IMR-90 (cell line): ENCODE measurements at regions of chr5 and their contacts with region 1.

Region 1: DNA sequence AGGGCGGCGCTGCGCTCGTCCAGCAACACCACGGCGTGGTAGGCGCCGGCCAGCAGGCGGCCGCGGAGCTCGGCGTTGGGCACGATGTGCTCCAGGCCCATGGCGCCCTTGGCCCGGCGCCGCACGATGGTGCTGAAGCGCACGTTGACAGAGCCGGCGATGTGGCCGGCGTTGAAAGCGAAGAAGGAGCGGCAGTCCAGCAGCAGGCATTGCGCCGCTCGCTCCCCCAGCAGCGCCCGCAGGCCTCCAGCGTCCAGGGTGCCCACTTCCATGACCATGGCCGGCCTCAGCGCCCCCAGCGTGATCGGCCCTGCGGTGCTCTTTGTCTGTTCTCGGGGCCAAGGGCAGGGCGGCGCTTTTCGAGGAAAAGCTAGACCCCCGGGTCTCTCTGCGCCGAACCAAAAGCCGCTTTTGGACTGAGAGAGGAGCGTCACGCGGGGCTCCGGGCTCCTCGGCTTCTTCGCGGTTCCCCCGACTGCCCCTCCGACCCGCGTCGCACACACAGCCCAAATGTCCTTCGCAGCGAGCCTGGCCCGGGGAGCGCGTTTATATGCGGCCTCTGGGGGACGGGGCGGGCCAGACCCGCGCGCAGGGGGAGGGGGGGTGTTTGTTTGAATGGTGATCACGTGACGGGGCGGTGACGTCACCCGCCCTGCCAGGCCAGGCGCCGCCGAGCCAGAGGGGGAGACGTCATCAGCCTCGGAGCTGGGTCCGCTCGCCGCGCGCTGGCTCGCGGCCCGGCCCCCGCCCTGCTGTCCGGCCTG is at the start of gene DUSP1:
- DNase-seq: peak; percentile 98
- ATAC-seq: peak; percentile 60
- H3K4me3 ChIP-seq: peak within 1 kb of the TSS; percentile 88
- H3K27ac ChIP-seq: peak within 1 kb of the TSS; percentile 98
- H3K4me1 ChIP-seq: peaks cover 20% of the 10 kb centered on the region
- H3K27me3 ChIP-seq: no peaks in the 10 kb centered on the region
- CTCF ChIP-seq: no peak
- POLR2A ChIP-seq: no peak
- RAD21 ChIP-seq: no peak
- total RNA-seq, gene DUSP1: 304 and 320 TPM in 2 replicates

Region 2: DNA sequence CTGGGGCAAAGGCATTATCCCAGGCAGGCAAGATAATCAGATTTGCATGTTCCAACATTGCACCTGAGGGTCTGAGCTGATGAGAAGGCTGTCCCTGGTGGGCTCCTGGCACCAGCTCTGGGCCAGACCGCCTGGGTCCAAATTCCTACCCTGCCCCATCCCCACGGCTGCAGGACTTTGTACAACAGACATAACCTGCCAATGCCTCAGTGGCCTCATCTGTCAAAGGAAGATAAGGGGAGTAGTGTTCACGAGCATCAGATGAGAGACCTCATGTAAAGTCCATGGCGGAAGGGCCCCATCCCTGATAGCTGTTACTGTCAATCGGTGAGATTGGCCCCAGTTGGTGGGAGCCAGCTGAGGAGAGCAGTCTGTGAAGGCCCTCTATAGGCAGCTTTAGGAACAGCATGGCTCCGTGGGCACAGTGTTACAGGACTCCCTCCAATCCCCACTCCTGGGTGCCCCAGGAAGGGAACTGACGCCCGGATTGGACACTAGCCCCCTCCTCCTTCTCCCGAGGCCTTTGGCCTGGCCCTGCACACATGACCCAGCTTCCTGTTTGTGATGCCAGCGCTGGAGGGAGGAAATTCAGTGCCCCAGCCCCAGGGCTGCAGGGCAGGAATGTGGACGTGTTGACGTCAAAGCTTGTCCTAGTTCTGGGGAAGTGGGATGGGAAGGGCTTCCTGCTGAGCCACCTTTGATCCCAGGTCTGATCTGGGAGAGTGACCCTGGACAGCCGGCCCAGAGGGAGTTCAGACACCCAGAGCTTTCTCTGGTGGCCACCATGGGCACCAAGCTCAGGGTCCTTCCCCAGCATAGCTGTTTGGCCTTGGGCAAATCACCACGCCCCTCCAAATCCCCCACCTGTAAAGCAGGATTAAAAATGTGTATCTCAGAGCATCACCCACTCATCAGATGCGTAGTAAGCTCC is 56.1 kb before region 1 on chr5:
- CTCF ChIA-PET with region 1: interaction called, 9 read pairs
- POLR2A ChIA-PET with region 1: interaction called, 13 read pairs
- dilution Hi-C with region 1: no loop called
- in situ Hi-C with region 1: loop called (anchors 5 kb)
- intact Hi-C with region 1: loop called (anchors 1 kb)
- DNase-seq: peak; percentile 61
- ATAC-seq: peak; percentile 74
- H3K4me3 ChIP-seq: no peak overlapping the region
- H3K27ac ChIP-seq: peak overlapping the region; percentile 2; the same call in 1 of the 2 replicates
- H3K4me1 ChIP-seq: peaks cover 6% of the 10 kb centered on the region
- H3K27me3 ChIP-seq: no peaks in the 10 kb centered on the region
- CTCF ChIP-seq: peak; percentile 69
- POLR2A ChIP-seq: no peak
- RAD21 ChIP-seq: peak; percentile 64

Region 3: DNA sequence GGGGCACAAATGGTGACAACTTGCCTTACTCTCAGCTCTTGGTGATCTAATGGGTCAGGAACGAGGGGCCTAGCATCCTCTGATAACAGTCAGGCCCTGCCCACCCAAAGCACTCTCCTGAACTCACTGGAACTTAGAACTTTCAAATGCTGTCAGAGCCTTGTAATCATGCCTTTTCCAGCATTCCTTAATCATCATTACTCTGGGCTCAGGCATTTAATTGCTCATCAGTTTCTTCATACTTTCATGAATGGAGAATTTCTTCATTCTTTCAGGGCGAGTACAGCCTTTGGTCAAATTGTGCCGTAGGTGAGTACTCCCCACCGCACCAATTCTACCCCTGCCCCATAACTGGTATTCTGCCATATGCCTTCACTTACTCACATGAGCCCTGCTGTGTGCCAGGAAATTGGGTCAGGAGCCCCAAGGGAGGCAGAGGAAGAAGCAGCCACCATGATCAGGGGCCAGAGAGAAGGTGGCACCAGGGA is 30.4 kb after region 1 on chr5:
- CTCF ChIA-PET with region 1: interaction called, 18 read pairs
- POLR2A ChIA-PET with region 1: interaction called, 8 read pairs
- dilution Hi-C with region 1: no loop called
- in situ Hi-C with region 1: no loop called
- intact Hi-C with region 1: loop called (anchors 1 kb)
- DNase-seq: peak; percentile 98
- ATAC-seq: peak; percentile 67
- H3K4me3 ChIP-seq: no peak overlapping the region
- H3K27ac ChIP-seq: peak overlapping the region; percentile 89
- H3K4me1 ChIP-seq: peaks cover 40% of the 10 kb centered on the region
- H3K27me3 ChIP-seq: no peaks in the 10 kb centered on the region
- CTCF ChIP-seq: no peak
- POLR2A ChIP-seq: peak; percentile 49; the same call in 1 of the 2 replicates
- RAD21 ChIP-seq: peak; percentile 26

Region 4: GRCh38 chr5:172858990-172859811 is 88.3 kb after region 1 on chr5:
- CTCF ChIA-PET with region 1: interaction called, 3 read pairs
- POLR2A ChIA-PET with region 1: interaction called, 3 read pairs
- dilution Hi-C with region 1: no loop called
- in situ Hi-C with region 1: no loop called
- intact Hi-C with region 1: loop called (anchors 2 kb)
- DNase-seq: peak; percentile 93
- ATAC-seq: peak; percentile 68
- H3K4me3 ChIP-seq: no peak overlapping the region
- H3K27ac ChIP-seq: peak overlapping the region; percentile 78
- H3K4me1 ChIP-seq: peaks cover 60% of the 10 kb centered on the region
- H3K27me3 ChIP-seq: no peaks in the 10 kb centered on the region
- CTCF ChIP-seq: no peak
- POLR2A ChIP-seq: no peak
- RAD21 ChIP-seq: peak; percentile 22; the same call in 1 of the 2 replicates

Region 5: DNA sequence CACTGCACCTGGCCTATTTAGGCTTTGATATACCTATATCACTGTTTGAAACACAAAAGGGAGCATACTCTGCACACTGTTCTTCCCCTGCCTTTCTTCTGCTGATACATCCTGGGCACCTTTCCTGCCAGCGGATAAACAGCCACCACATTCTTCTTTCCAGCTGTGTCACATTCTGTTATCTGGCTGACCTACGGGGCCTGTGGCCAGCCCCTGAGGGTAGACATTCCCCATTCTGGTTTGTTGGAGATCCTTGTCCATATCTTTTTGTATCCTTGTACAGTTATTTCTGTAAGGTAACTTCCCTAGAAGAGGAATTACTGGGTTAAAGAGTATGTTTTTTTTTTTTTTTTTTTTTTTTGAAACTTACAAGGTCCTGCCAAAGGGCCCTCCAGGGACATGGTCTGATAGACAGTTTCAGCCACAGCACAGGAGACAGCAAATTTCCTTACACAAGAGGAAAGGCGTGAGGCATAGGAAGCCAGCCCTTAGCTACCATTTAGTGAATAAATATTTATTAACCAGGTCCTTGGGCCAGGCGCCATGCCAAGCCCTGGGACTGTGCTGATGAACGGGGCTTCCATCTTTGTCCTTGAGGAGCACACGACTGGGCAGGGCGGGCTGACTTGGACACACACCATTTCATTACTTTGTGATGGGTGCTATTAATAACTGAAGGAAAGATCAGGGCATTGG is 121.0 kb after region 1 on chr5:
- CTCF ChIA-PET with region 1: no interaction called
- POLR2A ChIA-PET with region 1: interaction called, 23 read pairs
- dilution Hi-C with region 1: no loop called
- in situ Hi-C with region 1: no loop called
- intact Hi-C with region 1: no loop called
- DNase-seq: no peak
- ATAC-seq: no peak
- H3K4me3 ChIP-seq: no peak overlapping the region
- H3K27ac ChIP-seq: peak overlapping the region; percentile 79
- H3K4me1 ChIP-seq: peaks cover 29% of the 10 kb centered on the region
- H3K27me3 ChIP-seq: no peaks in the 10 kb centered on the region
- CTCF ChIP-seq: no peak
- POLR2A ChIP-seq: no peak
- RAD21 ChIP-seq: no peak

Region 6: DNA sequence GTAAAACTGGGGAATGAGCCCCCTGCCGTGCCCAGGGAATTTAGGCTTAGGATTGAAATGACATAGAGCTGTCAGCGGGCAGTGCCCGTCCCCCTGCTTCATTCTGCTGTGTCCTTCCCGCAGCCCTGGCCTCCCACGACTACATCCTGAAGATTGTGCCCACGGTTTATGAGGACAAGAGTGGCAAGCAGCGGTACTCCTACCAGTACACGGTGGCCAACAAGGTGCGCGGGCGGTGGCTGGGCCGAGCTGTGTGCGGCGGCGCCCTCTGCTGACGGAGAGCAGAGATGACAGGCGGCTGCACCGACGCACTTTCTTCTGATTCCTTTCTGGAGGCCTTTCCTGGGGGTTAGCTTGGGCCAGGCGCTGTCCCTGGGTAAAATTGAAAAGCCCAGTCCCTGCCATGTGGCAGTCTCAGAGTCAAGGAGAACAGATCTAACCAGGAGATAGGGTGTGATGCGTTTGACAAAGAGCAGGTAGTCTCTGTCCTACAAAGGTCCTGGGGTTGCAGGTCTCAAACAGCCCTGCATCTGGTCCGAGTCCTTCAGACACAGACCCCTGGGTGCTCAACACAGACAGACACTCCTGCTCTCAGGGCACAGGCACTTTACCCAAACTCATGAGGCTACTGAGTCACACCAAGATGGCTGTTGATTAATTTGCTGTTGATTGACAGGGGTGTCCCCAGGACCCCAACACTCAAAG is 161.6 kb after region 1 on chr5:
- CTCF ChIA-PET with region 1: interaction called, 5 read pairs
- POLR2A ChIA-PET with region 1: interaction called, 9 read pairs
- dilution Hi-C with region 1: no loop called
- in situ Hi-C with region 1: no loop called
- intact Hi-C with region 1: loop called (anchors 1 kb)
- DNase-seq: peak; percentile 78
- ATAC-seq: peak; percentile 64
- H3K4me3 ChIP-seq: no peak overlapping the region
- H3K27ac ChIP-seq: peak overlapping the region; percentile 73
- H3K4me1 ChIP-seq: peaks cover 22% of the 10 kb centered on the region
- H3K27me3 ChIP-seq: no peaks in the 10 kb centered on the region
- CTCF ChIP-seq: peak; percentile 96
- POLR2A ChIP-seq: peak; percentile 78
- RAD21 ChIP-seq: peak; percentile 98